Activated CD4-positive, alpha-beta T cell treated with anti-CD3 and anti-CD28 coated beads for 36 hours (primary cell): ENCODE measurements at regions of chr16 and their contacts with region 1.

Region 1: DNA sequence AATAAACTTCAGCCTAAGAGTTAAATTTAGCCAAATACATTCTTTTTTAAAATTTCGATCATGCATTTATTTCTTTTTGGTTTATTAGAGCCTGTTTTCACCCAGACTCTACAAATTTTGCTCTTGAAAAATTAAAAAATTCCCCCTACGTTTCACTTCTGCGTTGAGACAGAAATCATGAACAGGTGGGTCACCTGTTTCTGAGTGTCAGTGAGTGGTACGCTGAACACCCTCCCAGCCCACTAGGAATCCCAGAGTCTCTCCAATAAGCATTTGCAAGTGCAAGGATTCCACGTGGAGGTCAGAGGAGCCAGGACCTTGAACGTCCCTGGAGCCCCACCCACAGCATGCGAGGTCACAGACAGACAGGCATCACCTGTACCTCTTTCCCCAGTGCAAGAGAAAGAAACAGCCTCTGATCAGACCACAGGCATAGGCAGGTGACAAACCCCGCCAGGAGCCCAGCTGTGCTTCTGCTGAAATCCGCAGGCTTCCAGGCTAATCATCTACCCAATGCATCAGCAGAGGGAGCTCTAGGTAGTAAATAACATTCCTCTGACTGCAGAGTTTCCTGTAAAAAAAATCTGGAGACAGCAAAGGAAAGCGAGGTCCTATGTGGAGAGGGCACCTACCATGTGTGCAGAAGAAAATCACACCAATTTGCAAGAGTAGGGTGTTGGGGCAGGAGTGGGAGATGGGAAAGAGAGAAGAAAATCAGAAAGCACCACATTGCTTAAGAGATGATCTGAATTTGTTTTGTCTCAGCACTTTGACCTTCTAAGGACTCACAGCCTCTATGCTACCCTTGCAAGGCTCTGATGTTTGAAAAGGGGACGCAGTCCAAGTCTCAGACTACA is 5.9 kb upstream of the XYLT1 start:
- DNase-seq: peak; percentile 59
- ATAC-seq: peak; percentile 53
- H3K4me3 Mint-ChIP-seq: no peak overlapping the region
- H3K27ac Mint-ChIP-seq: no peak overlapping the region
- H3K4me1 Mint-ChIP-seq: peaks cover 24% of the 10 kb centered on the region
- H3K27me3 Mint-ChIP-seq: peaks cover 5% of the 10 kb centered on the region

Region 2: GRCh38 chr16:17205279-17206211 is 271.1 kb before region 1 on chr16:
- CTCF ChIA-PET with region 1: no interaction called
- POLR2A ChIA-PET with region 1: no interaction called
- intact Hi-C with region 1: loop called in 1 of 2 experiments (anchors 10 kb)
- DNase-seq: no peak
- ATAC-seq: no peak
- H3K4me3 Mint-ChIP-seq: no peak overlapping the region
- H3K27ac Mint-ChIP-seq: no peak overlapping the region
- H3K4me1 Mint-ChIP-seq: no peaks in the 10 kb centered on the region
- H3K27me3 Mint-ChIP-seq: no peaks in the 10 kb centered on the region